ENCODE measurements at regions of chr13 and their contacts with region 1.

Region 1: GRCh38 chr13:81017513-81018152 is 676.7 kb upstream of the SPRY2 start:
- DNase-seq: peak; percentile 3 to 11 (median 8)
- ATAC-seq: no peak
- H3K4me3 ChIP-seq: no peak overlapping the region
- H3K27ac ChIP-seq: no peak overlapping the region
- H3K4me1 ChIP-seq: no peaks in the 10 kb centered on the region
- H3K27me3 ChIP-seq: no peaks in the 10 kb centered on the region
- CTCF ChIP-seq: peak in 1 of 3 experiments; percentile 34; a peak in 1 of 6 replicates
- EP300 ChIP-seq: no peak
- POLR2A ChIP-seq: no peak
- RAD21 ChIP-seq: peak in 1 of 2 experiments; percentile 53; a peak in 2 of 4 replicates

Region 2: DNA sequence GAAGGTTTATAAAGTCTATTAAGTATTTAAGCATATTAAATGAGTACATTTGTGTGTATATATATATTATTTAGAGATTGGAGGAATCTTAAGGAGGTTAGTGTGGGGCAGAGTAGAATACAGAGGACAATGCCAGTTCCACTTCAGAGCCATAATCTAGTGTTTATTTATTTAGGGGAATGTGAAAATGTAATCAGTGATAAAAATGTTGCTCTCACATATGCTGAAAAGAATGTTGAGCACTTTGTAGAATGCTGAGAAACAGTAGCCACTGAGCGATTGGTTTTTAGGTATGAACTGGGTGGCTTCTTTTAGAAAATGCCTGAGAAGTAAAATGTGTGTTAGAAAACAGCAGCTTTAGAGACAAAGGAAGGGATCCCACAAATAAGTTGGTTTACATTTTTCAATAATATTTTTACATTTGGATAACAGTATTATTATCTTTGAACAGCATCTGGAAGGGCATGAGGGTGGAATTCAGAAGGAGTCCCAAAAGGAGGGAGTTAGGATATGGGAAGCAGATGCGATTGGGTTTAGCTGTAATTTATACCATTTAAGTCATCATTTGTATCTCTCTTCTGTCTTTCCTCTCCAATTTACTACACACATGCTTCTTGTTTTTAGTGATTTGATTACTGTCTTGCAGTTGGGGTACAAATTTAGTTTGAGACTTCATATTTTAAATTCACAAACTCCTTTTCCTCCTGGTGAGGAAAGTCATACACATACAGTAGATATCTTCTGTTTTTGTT is 1468.1 kb before region 1 on chr13:
- CTCF ChIA-PET with region 1: no interaction called
- POLR2A ChIA-PET with region 1: no interaction called
- in situ Hi-C with region 1: no loop called
- intact Hi-C with region 1: loop called (anchors 10 kb)
- DNase-seq: no peak
- ATAC-seq: no peak
- H3K4me3 ChIP-seq: no peak overlapping the region
- H3K27ac ChIP-seq: no peak overlapping the region
- H3K4me1 ChIP-seq: no peaks in the 10 kb centered on the region
- H3K27me3 ChIP-seq: no peaks in the 10 kb centered on the region
- CTCF ChIP-seq: no peak
- EP300 ChIP-seq: no peak
- POLR2A ChIP-seq: no peak
- RAD21 ChIP-seq: no peak

Region 3: GRCh38 chr13:79679334-79679733 is 1338.3 kb before region 1 on chr13:
- CTCF ChIA-PET with region 1: no interaction called
- POLR2A ChIA-PET with region 1: no interaction called
- in situ Hi-C with region 1: no loop called
- intact Hi-C with region 1: loop called (anchors 5 kb)
- DNase-seq: peak; percentile 9 to 61 (median 30)
- ATAC-seq: peak; percentile 83
- H3K4me3 ChIP-seq: no peak overlapping the region
- H3K27ac ChIP-seq: no peak overlapping the region
- H3K4me1 ChIP-seq: no peaks in the 10 kb centered on the region
- H3K27me3 ChIP-seq: no peaks in the 10 kb centered on the region
- CTCF ChIP-seq: peak; percentile 50 to 68 (median 59)
- EP300 ChIP-seq: no peak
- POLR2A ChIP-seq: no peak
- RAD21 ChIP-seq: peak; percentile 52 to 69

Region 4: GRCh38 chr13:80716610-80717081 is 301.0 kb before region 1 on chr13:
- CTCF ChIA-PET with region 1: no interaction called
- POLR2A ChIA-PET with region 1: no interaction called
- in situ Hi-C with region 1: no loop called
- intact Hi-C with region 1: no loop called
- DNase-seq: peak in 1 of 4 experiments; percentile 23
- ATAC-seq: no peak; the same call in 2 of the 3 replicates
- H3K4me3 ChIP-seq: no peak overlapping the region
- H3K27ac ChIP-seq: no peak overlapping the region
- H3K4me1 ChIP-seq: no peaks in the 10 kb centered on the region
- H3K27me3 ChIP-seq: no peaks in the 10 kb centered on the region
- CTCF ChIP-seq: no peak
- EP300 ChIP-seq: no peak
- POLR2A ChIP-seq: no peak
- RAD21 ChIP-seq: no peak

Measured in K562 (cell line).